GM12878 (cell line): ENCODE measurements at regions of chr5 and their contacts with region 1.

Region 1: GRCh38 chr5:164277720-164278119 is 772.3 kb downstream of the MAT2B start:
- DNase-seq: no peak
- ATAC-seq: peak; percentile 71
- H3K4me3 ChIP-seq: no peak overlapping the region
- H3K27ac ChIP-seq: no peak overlapping the region
- H3K4me1 ChIP-seq: no peaks in the 10 kb centered on the region
- H3K27me3 ChIP-seq: no peaks in the 10 kb centered on the region
- CTCF ChIP-seq: no peak
- EP300 ChIP-seq: no peak
- POLR2A ChIP-seq: no peak
- RAD21 ChIP-seq: no peak

Region 2: GRCh38 chr5:164265566-164265965 is 12.2 kb before region 1 on chr5:
- CTCF ChIA-PET with region 1: interaction called, 10 read pairs
- POLR2A ChIA-PET with region 1: interaction called, 3 read pairs
- RAD21 ChIA-PET with region 1: interaction called, 5 read pairs
- SMC1A ChIA-PET with region 1: interaction called, 17 read pairs
- in situ Hi-C with region 1: no loop called
- intact Hi-C with region 1: no loop called
- DNase-seq: no peak
- ATAC-seq: no peak
- H3K4me3 ChIP-seq: no peak overlapping the region
- H3K27ac ChIP-seq: no peak overlapping the region
- H3K4me1 ChIP-seq: no peaks in the 10 kb centered on the region
- H3K27me3 ChIP-seq: no peaks in the 10 kb centered on the region
- CTCF ChIP-seq: no peak
- EP300 ChIP-seq: no peak
- POLR2A ChIP-seq: no peak
- RAD21 ChIP-seq: no peak

Region 3: GRCh38 chr5:164289526-164289925 is 11.8 kb after region 1 on chr5:
- CTCF ChIA-PET with region 1: interaction called, 4 read pairs
- POLR2A ChIA-PET with region 1: no interaction called
- RAD21 ChIA-PET with region 1: interaction called, 5 read pairs
- SMC1A ChIA-PET with region 1: interaction called, 49 read pairs
- in situ Hi-C with region 1: no loop called
- intact Hi-C with region 1: no loop called
- DNase-seq: no peak
- ATAC-seq: no peak
- H3K4me3 ChIP-seq: no peak overlapping the region
- H3K27ac ChIP-seq: no peak overlapping the region
- H3K4me1 ChIP-seq: no peaks in the 10 kb centered on the region
- H3K27me3 ChIP-seq: no peaks in the 10 kb centered on the region
- CTCF ChIP-seq: no peak
- EP300 ChIP-seq: no peak
- POLR2A ChIP-seq: no peak
- RAD21 ChIP-seq: no peak

Region 4: DNA sequence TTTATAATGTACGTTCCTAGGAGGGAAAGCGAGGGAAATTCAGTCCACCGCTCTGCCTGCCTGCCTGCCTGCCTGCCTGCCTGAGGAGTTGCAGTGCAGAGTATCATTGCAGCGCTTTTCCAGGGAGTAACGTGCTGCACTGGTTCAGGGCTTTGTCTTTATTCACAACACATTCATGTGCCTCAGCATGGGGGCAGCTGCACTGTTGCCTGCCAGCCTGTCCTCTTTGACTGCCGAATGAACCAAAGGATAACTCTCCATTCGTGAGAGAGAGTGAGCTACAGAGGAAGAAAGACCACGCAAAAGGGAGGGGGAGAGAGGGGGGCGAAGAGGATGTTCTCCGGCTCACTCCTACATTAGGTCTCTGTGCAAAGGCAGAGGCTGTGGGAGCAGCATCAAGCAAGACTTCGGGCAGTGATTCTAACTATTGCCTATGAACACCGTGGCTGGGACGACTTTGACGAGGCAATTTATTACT is 18.9 kb after region 1 on chr5:
- CTCF ChIA-PET with region 1: interaction called, 6 read pairs
- POLR2A ChIA-PET with region 1: interaction called, 3 read pairs
- RAD21 ChIA-PET with region 1: interaction called, 9 read pairs
- SMC1A ChIA-PET with region 1: interaction called, 49 read pairs
- in situ Hi-C with region 1: no loop called
- intact Hi-C with region 1: no loop called
- DNase-seq: no peak
- ATAC-seq: peak; percentile 16; the same call in 1 of the 3 replicates
- H3K4me3 ChIP-seq: no peak overlapping the region
- H3K27ac ChIP-seq: no peak overlapping the region
- H3K4me1 ChIP-seq: no peaks in the 10 kb centered on the region
- H3K27me3 ChIP-seq: no peaks in the 10 kb centered on the region
- CTCF ChIP-seq: no peak
- EP300 ChIP-seq: no peak
- POLR2A ChIP-seq: no peak
- RAD21 ChIP-seq: no peak